ENCODE measurements at regions of chr1 and their contacts with region 1.

Region 1: DNA sequence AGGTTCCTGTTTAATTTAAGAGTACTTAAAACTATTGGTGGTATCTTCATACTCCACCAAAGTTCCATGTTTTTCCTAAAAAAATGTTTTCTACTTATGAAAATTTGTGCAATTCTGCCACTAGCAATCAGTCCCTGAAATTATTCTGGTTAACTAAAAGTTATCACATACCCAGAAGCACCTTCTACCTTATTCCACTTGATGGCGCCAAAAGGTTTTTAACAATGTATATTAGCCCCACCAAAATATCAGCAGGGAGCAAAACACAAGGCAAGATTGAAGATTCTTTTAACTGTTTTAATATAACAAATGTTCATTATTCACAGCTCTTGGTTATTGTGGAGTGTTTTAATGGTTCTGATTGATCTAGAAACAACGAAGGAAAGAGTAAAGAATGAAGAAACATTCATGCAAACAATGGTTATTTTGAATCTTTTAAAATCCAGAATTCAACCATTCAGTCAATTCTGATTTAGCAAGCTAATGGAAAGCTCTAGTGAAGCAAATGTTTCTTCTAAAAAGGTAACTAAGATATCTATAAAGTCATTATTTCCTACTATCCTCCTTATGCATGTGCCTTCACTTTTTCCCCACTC is 67.2 kb downstream of the TTLL7 start:
- DNase-seq: no peak
- H3K4me3 ChIP-seq: no peak overlapping the region
- H3K27ac ChIP-seq: no peak overlapping the region
- H3K4me1 ChIP-seq: peaks cover 0 to 8% (median 3%) of the 10 kb centered on the region in 4 donors
- H3K27me3 ChIP-seq: no peaks in the 10 kb centered on the region
- CTCF ChIP-seq: peak; percentile 63 to 77 (median 74)
- EP300 ChIP-seq: no peak
- POLR2A ChIP-seq: no peak

Region 2: GRCh38 chr1:83872515-83872914 is 59.2 kb before region 1 on chr1:
- in situ Hi-C with region 1: no loop called
- intact Hi-C with region 1: no loop called
- DNase-seq: no peak
- H3K4me3 ChIP-seq: no peak overlapping the region
- H3K27ac ChIP-seq: no peak overlapping the region
- H3K4me1 ChIP-seq: no peaks in the 10 kb centered on the region
- H3K27me3 ChIP-seq: no peaks in the 10 kb centered on the region
- CTCF ChIP-seq: no peak
- EP300 ChIP-seq: no peak
- POLR2A ChIP-seq: no peak

Region 3: DNA sequence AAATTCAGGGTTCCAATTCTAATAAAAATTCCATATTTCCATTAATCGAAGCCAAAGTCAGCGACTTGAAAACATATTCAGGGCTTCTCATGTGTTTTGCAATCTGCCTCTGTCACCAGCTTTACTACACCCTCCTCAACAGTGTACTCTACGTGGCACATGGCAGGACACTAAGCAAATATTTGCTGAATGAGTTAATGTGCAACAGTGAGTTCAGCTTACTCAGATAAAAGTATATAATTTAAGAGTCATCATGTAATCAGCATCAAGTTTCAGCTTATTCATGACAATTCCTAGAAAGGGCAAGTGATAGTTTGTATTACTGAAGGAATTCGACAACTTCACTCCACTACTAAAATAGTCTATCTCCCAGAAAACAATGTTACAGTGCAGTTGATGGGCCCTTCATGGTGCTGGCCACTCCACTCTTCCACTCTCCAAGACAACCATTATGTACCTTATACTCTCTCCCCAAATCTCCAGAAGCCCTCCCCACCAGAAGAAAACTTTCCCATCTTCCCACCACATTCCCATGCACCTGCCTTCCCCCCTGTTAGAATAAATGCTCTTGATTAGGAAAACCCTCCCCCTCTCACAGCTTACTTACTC is 30.1 kb before region 1 on chr1:
- in situ Hi-C with region 1: no loop called
- intact Hi-C with region 1: no loop called
- DNase-seq: peak; percentile 36
- H3K4me3 ChIP-seq: no peak overlapping the region
- H3K27ac ChIP-seq: no peak overlapping the region
- H3K4me1 ChIP-seq: peaks cover 0 to 15% (median 0%) of the 10 kb centered on the region in 4 donors
- H3K27me3 ChIP-seq: no peaks in the 10 kb centered on the region
- CTCF ChIP-seq: no peak
- EP300 ChIP-seq: no peak
- POLR2A ChIP-seq: no peak

Region 4: GRCh38 chr1:84117868-84118267 is 186.1 kb after region 1 on chr1:
- in situ Hi-C with region 1: loop called (anchors 5 to 25 kb)
- intact Hi-C with region 1: loop called (anchors 5 kb)
- DNase-seq: no peak
- H3K4me3 ChIP-seq: no peak overlapping the region
- H3K27ac ChIP-seq: no peak overlapping the region
- H3K4me1 ChIP-seq: no peaks in the 10 kb centered on the region
- H3K27me3 ChIP-seq: no peaks in the 10 kb centered on the region
- CTCF ChIP-seq: no peak
- EP300 ChIP-seq: no peak
- POLR2A ChIP-seq: no peak

Region 5: DNA sequence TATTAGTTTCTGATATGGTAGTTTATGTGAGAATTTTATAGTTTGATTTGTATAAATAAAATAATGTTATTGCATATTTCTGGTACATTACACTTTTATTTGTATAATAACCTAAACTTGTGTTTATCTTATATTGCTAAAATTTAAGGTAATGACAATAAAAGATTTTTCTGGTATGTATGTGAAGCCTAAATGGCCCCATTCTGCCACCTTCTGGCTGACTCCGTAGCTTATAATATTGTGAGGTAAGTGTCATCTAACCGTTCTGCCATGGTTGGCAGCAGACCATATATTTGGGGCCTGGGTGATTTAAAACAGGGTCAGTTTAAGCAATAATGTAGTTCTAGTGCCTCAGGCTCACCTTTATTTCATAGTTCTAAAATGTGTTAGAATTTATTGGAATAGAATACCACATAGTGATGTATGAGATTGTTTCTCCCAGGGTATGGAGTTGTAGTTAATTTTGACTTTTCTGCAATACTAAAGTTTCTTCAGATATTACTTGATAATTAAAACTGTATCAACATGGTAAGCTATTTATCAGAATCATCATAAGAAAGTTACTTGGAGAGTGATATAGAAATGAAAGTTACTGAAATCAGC is 191.1 kb after region 1 on chr1:
- in situ Hi-C with region 1: loop called (anchors 5 to 25 kb)
- intact Hi-C with region 1: loop called (anchors 5 kb)
- DNase-seq: peak; percentile 60
- H3K4me3 ChIP-seq: no peak overlapping the region
- H3K27ac ChIP-seq: no peak overlapping the region
- H3K4me1 ChIP-seq: no peaks in the 10 kb centered on the region
- H3K27me3 ChIP-seq: no peaks in the 10 kb centered on the region
- CTCF ChIP-seq: peak; percentile 58 to 69 (median 61)
- EP300 ChIP-seq: no peak
- POLR2A ChIP-seq: no peak

Region 6: GRCh38 chr1:84772428-84772943 is 840.7 kb after region 1 on chr1:
- in situ Hi-C with region 1: loop called in 1 of 4 experiments (anchors 10 kb)
- intact Hi-C with region 1: no loop called
- DNase-seq: peak; percentile 86
- H3K4me3 ChIP-seq: no peak overlapping the region
- H3K27ac ChIP-seq: no peak overlapping the region
- H3K4me1 ChIP-seq: no peaks in the 10 kb centered on the region
- H3K27me3 ChIP-seq: no peaks in the 10 kb centered on the region
- CTCF ChIP-seq: peak; percentile 80 to 96 (median 90)
- EP300 ChIP-seq: no peak
- POLR2A ChIP-seq: no peak